ENCODE measurements at regions of chr3 and their contacts with region 1.

Region 1: GRCh38 chr3:12556671-12557472 is at the start of gene MKRN2:
- DNase-seq: peak; percentile 95
- ATAC-seq: peak; percentile 91
- H3K4me3 ChIP-seq: peak within 1 kb of the TSS; percentile 78
- H3K27ac ChIP-seq: peak within 1 kb of the TSS; percentile 66
- H3K4me1 ChIP-seq: peaks cover 16% of the 10 kb centered on the region
- H3K27me3 ChIP-seq: no peaks in the 10 kb centered on the region
- CTCF ChIP-seq: no peak
- total RNA-seq, gene MKRN2: 41.6 and 45.8 TPM in 2 replicates

Region 2: DNA sequence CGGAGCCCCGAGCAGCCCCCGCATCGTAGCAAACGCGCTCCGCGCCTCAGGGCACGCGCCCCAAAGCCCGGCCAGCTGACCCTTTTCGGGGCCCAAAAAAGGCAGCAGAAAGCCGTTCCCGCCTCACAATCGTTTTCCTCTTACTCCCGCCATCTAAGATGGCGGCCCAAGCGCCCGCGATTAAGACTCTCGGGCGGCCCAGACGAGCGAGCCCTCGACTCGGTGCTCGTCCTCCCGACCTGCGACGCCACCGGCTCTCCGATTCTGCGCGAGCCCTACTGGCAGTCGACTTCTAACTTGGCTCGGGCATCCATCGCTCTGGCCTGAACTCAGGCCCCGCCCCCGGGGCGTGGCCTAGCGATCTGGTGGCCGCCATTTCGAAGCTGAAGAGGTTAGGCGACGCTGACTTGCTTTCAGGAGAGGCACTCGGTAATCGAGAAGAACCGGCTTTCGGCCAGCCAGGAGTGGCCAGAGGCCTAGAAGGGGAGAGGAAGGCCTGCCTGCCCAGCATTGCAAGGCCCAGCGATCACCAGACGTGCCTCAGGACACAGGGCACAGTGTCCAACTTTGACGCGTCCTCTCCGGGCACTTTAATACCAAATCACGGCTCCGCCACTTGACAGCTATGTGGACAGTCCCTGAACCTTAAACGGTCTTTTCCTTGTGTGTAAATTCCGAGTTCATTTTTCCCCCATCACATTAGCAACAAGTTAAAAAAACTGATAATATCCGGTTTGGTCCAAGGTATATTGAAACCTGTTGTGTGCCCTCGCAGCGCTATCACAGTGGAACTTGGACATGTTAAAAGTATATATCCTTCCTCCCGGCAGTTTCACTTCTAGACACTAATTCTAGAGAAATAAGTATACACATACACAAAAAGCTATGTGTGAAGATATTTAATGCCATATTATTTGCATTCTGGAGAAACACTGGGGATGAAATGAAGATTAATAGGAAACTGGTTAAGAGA is 107.3 kb after region 1 on chr3 and contains the start of gene RAF1:
- CTCF ChIA-PET with region 1: no interaction called
- POLR2A ChIA-PET with region 1: no interaction called
- intact Hi-C with region 1: loop called (anchors 5 kb)
- DNase-seq: peak; percentile 99
- ATAC-seq: peak; percentile 86
- H3K4me3 ChIP-seq: peak within 1 kb of the TSS; percentile 92
- H3K27ac ChIP-seq: peak within 1 kb of the TSS; percentile 85
- H3K4me1 ChIP-seq: peaks cover 27% of the 10 kb centered on the region
- H3K27me3 ChIP-seq: no peaks in the 10 kb centered on the region
- CTCF ChIP-seq: no peak
- total RNA-seq, gene RAF1: 113 and 130 TPM in 2 replicates

Region 3: DNA sequence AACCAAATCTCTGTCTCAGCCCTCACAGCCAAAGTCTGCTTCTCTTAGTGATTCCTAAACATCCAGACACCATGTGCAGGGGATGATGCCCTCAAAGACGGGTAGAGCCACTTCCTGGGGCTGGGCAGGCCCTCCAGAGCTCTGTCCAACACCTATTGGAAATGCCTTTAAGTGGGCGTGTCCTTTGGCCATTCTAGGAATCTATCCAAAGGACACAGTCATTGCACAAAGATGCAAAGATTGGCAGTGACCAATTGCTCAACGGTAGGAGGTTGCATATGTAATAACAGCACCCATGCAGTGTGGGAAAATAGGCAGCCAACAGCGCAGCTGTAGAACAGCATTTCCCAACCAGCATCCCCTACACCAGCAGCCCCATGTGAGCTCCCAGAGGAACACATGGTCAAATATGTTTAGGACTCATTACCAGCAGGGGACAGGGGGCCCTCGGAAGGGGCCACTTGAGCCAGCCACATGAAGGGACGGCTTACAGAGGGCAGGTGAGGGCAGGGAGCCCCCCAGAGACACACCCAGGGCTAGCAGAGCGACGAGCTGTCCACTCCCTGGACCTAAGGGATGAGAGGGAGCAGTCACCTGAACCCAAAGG is 659.2 kb after region 1 on chr3:
- CTCF ChIA-PET with region 1: no interaction called
- POLR2A ChIA-PET with region 1: no interaction called
- intact Hi-C with region 1: no loop called
- DNase-seq: peak; percentile 98
- ATAC-seq: peak; percentile 61
- H3K4me3 ChIP-seq: no peak overlapping the region
- H3K27ac ChIP-seq: peak overlapping the region; percentile 70
- H3K4me1 ChIP-seq: peaks cover 45% of the 10 kb centered on the region
- H3K27me3 ChIP-seq: no peaks in the 10 kb centered on the region
- CTCF ChIP-seq: no peak